Body of pancreas (tissue), 4 donors: ENCODE measurements at regions of chr19 and their contacts with region 1.

Region 1: DNA sequence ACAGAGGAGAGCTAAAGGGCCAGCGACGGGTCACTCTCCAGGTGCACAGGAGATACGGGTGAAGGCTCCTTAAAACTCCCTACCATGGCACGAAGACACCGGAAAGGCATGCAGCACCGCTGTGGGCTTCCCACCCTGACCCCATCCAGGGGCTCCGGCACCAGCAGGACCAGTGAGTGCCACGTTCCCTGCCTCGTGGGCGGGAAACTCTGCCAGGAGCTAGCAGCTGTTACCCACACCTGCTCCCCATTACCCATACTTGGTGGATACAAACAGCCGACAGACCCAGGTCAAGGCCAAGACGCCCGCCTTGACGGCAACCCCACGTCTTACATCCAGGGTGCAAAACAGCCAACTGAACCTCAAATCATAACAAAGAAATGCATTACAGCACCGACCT is 56.7 kb downstream of the GNG7 start:
- DNase-seq: no peak
- ATAC-seq: no peak
- H3K4me3 ChIP-seq: no peak overlapping the region
- H3K27ac ChIP-seq: no peak overlapping the region
- H3K4me1 ChIP-seq: no peaks in the 10 kb centered on the region
- H3K27me3 ChIP-seq: no peaks in the 10 kb centered on the region
- CTCF ChIP-seq: no peak
- POLR2A ChIP-seq: no peak

Region 2: GRCh38 chr19:2236314-2237050 is 409.3 kb before region 1 on chr19 and contains the starts of genes PLEKHJ1 and SF3A2:
- intact Hi-C with region 1: no loop called
- DNase-seq: peak; percentile 95 to 97 (median 96)
- ATAC-seq: peak; percentile 90
- H3K4me3 ChIP-seq: peak within 1 kb of the TSS; percentile 87 to 90
- H3K27ac ChIP-seq: peak within 1 kb of the TSS; percentile 92 to 99 (median 97)
- H3K4me1 ChIP-seq: peaks cover 70% of the 10 kb centered on the region
- H3K27me3 ChIP-seq: no peaks in the 10 kb centered on the region
- CTCF ChIP-seq: peak; percentile 99 to 100 (median 99)
- POLR2A ChIP-seq: peak; percentile 64 to 85 (median 84)
- total RNA-seq, gene PLEKHJ1: 47.5 to 89.0 TPM
- total RNA-seq, gene SF3A2: 15.5 to 30.1 TPM

Region 3: DNA sequence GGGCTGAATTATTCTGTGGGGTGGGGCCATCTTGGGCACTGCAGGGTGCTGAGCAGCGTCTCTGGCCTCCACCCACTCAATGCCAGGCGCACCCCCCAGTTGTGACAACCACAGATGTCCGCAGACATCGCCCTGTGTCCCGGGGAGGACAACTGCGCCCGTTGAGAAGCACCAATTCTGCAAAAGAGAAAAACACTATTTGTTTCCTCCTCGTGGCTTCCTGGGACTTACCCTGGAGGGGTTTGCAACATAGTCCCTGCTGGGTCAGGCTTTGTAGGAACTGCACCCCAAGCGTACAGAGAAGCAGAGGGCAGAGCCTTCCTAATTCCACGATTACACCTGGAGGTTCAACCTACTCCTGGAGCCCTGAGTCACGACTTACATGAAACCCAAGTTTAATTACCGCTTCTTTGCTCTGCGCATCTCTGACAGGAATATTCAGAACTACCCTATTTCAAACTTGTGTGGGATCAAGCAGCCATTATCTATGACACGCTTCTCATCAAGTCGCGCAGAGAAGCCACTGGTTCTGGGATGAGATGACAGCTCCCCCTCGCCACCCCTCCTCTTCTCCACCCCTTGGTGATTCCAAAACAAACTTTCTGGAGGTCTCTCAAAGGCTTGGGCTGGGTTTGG is 105.1 kb after region 1 on chr19:
- intact Hi-C with region 1: loop called (anchors 2 kb)
- DNase-seq: no peak
- ATAC-seq: no peak
- H3K4me3 ChIP-seq: no peak overlapping the region
- H3K27ac ChIP-seq: no peak overlapping the region
- H3K4me1 ChIP-seq: peaks cover 5% of the 10 kb centered on the region
- H3K27me3 ChIP-seq: no peaks in the 10 kb centered on the region
- CTCF ChIP-seq: no peak
- POLR2A ChIP-seq: no peak